PC-3 (cell line): ENCODE measurements at regions of chr7 and their contacts with region 1.

Region 1: GRCh38 chr7:144835652-144836544 is at the start of gene TPK1:
- DNase-seq: peak; percentile 87
- ATAC-seq: peak; percentile 88
- H3K4me3 ChIP-seq: peak within 1 kb of the TSS; percentile 98
- H3K27ac ChIP-seq: peak within 1 kb of the TSS; percentile 70
- H3K4me1 ChIP-seq: peaks cover 10% of the 10 kb centered on the region
- H3K27me3 ChIP-seq: no peaks in the 10 kb centered on the region
- CTCF ChIP-seq: no peak
- total RNA-seq, gene TPK1: 1.3 and 4.5 TPM in 2 replicates

Region 2: GRCh38 chr7:144786522-144786921 is 49.4 kb before region 1 on chr7:
- CTCF ChIA-PET with region 1: no interaction called
- POLR2A ChIA-PET with region 1: no interaction called
- intact Hi-C with region 1: loop called (anchors 5 kb)
- DNase-seq: no peak
- ATAC-seq: peak; percentile 42; the same call in 1 of the 2 replicates
- H3K4me3 ChIP-seq: no peak overlapping the region
- H3K27ac ChIP-seq: no peak overlapping the region
- H3K4me1 ChIP-seq: no peaks in the 10 kb centered on the region
- H3K27me3 ChIP-seq: no peaks in the 10 kb centered on the region
- CTCF ChIP-seq: peak; percentile 37

Region 3: DNA sequence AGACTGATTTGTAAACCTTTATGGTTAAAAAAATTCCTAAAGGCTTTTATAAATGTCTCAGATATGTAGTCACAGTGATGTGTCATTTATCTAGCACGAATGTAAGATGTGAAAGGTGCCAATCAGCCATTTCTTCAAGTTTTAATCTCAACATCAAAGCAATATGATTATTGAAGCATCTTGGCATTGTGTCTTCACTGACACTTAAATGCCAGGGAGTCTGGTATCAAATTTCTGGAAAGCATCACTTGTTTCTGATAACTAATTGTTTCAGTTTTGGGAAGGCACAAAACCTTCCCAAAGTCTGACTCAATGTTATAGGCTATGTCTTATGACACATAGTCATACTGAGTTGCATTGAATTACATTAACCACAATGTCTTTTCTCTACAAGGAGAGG is 788.7 kb after region 1 on chr7:
- CTCF ChIA-PET with region 1: no interaction called
- POLR2A ChIA-PET with region 1: interaction called, 10 read pairs
- intact Hi-C with region 1: no loop called
- DNase-seq: peak; percentile 84
- ATAC-seq: peak; percentile 93
- H3K4me3 ChIP-seq: peak overlapping the region; percentile 44; the same call in 1 of the 2 replicates
- H3K27ac ChIP-seq: peak overlapping the region; percentile 99
- H3K4me1 ChIP-seq: peaks cover 27% of the 10 kb centered on the region
- H3K27me3 ChIP-seq: no peaks in the 10 kb centered on the region
- CTCF ChIP-seq: no peak